Activated T-helper 2 cell treated with anti-CD3 and anti-CD28 coated beads, Interferon-gamma antibody, Interleukin-2, Interleukin-4, amounts not matched to agents 10 μg/mL and 5 μg/mL and 100 μg/mL, durations not matched to agents 14 hours and 24 hours and 36 hours (primary cell): ENCODE measurements at regions of chr5 and their contacts with region 1.

Region 1: DNA sequence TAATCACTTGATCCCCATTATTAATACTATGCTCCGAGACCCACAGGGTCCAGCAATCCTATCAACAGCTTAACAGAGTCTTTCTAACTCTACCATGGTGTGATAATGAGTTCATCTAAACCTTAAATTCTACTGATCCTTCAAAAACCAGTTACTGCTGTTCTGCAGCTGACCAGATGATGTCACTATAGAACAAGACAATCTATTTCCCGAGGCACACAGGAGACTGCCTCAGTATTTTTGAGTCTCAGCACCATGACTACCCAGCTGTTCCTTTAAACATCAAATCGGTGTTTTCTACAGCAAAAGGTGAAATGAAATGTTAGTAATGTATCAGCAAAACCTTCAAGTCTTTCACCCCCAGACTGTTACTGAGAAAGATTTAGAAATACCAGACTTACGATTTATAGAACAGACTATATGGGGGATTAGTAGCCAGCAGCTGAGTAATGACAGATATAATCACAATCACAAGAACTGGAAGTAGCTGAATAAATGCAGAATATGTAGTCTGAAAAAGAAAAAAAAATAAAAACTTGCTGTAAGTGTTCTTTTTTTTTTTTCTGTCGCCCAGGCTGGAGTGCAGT is 16.9 kb downstream of the DNAJC18 start:
- DNase-seq: peak; percentile 53
- H3K4me3 Mint-ChIP-seq: no peak overlapping the region
- H3K27ac Mint-ChIP-seq: peak overlapping the region; percentile 58
- H3K4me1 Mint-ChIP-seq: peaks cover 22% of the 10 kb centered on the region
- H3K27me3 Mint-ChIP-seq: no peaks in the 10 kb centered on the region

Region 2: DNA sequence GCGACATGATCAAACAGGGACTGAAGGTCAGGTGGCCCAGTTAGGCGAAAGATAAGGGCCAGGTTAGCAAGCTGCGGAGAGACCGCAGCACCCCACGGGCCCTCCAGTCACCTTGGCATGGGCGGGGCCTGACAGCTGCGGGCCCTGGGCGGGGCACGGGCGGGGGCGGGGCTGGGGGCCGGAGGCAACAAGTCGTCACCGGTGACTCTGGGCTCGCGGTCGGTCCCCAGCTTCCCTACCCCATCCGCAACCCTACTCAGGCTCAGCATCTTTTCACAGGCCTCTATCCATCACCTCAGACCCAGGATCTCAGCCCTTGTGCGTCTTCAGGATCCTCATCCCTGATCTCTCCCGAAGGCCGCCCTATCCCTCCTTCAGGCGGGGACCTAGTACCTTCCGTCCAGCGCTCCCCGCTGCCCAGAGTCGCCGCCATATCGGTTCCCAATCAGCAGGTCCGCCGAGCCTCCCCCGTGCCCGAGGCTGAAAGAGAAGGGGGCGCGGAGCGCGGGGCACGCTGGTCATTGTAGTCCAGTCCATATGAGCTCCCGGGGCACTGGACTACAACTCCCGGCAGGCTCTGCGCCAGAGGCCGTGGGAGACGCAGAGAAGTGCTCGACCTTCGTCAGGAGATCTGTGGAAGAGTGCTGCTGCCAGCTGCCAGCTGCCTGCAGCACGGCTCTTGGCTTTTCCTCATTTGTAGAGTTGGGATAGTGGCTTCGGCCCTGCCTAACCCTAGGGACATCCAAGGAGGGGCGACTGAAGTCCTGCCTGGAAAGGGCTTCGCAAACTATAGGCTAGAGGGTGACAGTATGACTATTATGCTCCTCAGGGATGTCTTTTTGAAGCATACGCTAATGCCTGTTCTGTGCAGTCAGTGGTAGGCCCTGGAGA is 16.9 kb after region 1 on chr5 and contains the start of gene DNAJC18:
- intact Hi-C with region 1: loop called (anchors 2 kb)
- DNase-seq: peak; percentile 84
- H3K4me3 Mint-ChIP-seq: peak within 1 kb of the TSS; percentile 93
- H3K27ac Mint-ChIP-seq: peak within 1 kb of the TSS; percentile 98
- H3K4me1 Mint-ChIP-seq: peaks cover 58% of the 10 kb centered on the region
- H3K27me3 Mint-ChIP-seq: no peaks in the 10 kb centered on the region
- total RNA-seq, gene DNAJC18: 29.8 and 35.8 TPM in 2 replicates